ENCODE measurements at regions of chr2 and their contacts with region 1.

Region 1: GRCh38 chr2:43312755-43313641 is 86.6 kb upstream of the ZFP36L2 start:
- DNase-seq: peak; percentile 79
- ATAC-seq: peak; percentile 91
- H3K4me3 ChIP-seq: no peak overlapping the region
- H3K27ac ChIP-seq: peak overlapping the region; percentile 38
- H3K4me1 ChIP-seq: peaks cover 37% of the 10 kb centered on the region
- H3K27me3 ChIP-seq: no peaks in the 10 kb centered on the region
- CTCF ChIP-seq: no peak

Region 2: GRCh38 chr2:43288417-43289305 is 24.3 kb before region 1 on chr2:
- CTCF ChIA-PET with region 1: no interaction called
- POLR2A ChIA-PET with region 1: no interaction called
- intact Hi-C with region 1: no loop called
- DNase-seq: no peak
- ATAC-seq: no peak
- H3K4me3 ChIP-seq: no peak overlapping the region
- H3K27ac ChIP-seq: no peak overlapping the region
- H3K4me1 ChIP-seq: peaks cover 7% of the 10 kb centered on the region
- H3K27me3 ChIP-seq: no peaks in the 10 kb centered on the region
- CTCF ChIP-seq: no peak

Region 3: DNA sequence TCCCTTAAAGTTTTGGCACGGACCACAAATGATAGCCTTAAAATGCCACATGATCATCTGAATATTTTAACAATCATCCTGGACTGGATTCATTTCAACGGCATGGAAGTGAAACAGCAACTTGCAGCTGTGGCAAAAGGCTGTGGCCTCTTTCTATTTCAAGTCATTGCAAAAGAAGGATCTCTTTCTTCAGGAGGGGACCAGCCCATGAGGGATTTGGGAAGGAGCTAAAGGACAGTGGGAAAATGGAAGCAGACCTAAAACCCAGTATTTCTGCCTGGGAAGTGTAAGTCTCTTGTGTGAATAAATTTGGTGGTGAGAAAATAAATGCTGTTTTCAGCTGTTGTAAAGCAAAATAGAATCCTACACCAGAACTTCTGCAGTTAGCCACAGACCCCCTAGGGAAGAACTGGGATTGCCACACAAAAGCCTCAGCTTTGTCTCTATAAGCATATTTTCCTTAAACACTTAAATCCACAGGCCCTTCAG is 20.7 kb after region 1 on chr2:
- CTCF ChIA-PET with region 1: no interaction called
- POLR2A ChIA-PET with region 1: no interaction called
- intact Hi-C with region 1: no loop called
- DNase-seq: no peak
- ATAC-seq: no peak
- H3K4me3 ChIP-seq: no peak overlapping the region
- H3K27ac ChIP-seq: no peak overlapping the region
- H3K4me1 ChIP-seq: no peaks in the 10 kb centered on the region
- H3K27me3 ChIP-seq: no peaks in the 10 kb centered on the region
- CTCF ChIP-seq: no peak

Region 4: DNA sequence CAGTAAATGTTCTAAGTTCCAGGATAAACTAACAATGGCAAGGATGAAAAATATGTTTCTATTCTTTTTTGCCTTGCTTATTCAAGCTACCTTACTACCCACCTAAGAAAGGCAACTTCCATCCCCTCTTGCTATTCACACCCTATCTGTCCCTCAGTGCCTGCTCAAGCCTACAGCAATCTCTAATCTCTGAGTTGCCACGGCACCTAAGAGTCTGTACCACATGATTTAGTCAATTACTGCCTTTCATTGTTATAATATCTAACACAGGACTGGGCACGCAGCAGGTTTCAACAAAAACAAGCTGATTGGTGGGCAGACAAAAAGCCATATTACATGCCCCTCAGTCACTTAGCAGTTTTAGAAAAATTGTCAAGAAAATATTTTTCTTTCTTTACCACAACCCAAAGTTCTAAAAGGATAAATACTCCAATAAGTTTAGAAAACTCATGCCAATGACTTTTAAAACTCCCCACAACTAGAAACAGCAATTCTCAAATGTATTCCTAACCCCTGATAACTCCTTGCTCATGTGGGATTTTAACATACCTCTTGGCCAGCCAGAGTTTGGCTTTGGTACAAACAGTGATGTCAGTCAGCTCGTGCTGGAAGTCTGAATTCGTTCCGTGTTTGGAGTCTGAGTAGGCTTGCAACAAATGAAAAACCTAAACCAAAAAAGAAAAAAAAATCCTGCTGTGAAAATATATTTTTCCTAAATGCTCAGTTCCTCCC is 30.7 kb after region 1 on chr2:
- CTCF ChIA-PET with region 1: no interaction called
- POLR2A ChIA-PET with region 1: no interaction called
- intact Hi-C with region 1: loop called (anchors 2 kb)
- DNase-seq: no peak
- ATAC-seq: no peak
- H3K4me3 ChIP-seq: no peak overlapping the region
- H3K27ac ChIP-seq: no peak overlapping the region
- H3K4me1 ChIP-seq: peaks cover 23% of the 10 kb centered on the region
- H3K27me3 ChIP-seq: no peaks in the 10 kb centered on the region
- CTCF ChIP-seq: no peak

Region 5: GRCh38 chr2:43461453-43462073 is 148.6 kb after region 1 on chr2:
- CTCF ChIA-PET with region 1: no interaction called
- POLR2A ChIA-PET with region 1: no interaction called
- intact Hi-C with region 1: no loop called
- DNase-seq: peak; percentile 37
- ATAC-seq: peak; percentile 10; the same call in 1 of the 2 replicates
- H3K4me3 ChIP-seq: no peak overlapping the region
- H3K27ac ChIP-seq: no peak overlapping the region
- H3K4me1 ChIP-seq: peaks cover 61% of the 10 kb centered on the region
- H3K27me3 ChIP-seq: no peaks in the 10 kb centered on the region
- CTCF ChIP-seq: no peak

Region 6: GRCh38 chr2:43605079-43605655 is 292.2 kb after region 1 on chr2:
- CTCF ChIA-PET with region 1: no interaction called
- POLR2A ChIA-PET with region 1: interaction called, 16 read pairs
- intact Hi-C with region 1: no loop called
- DNase-seq: peak; percentile 75
- ATAC-seq: peak; percentile 92
- H3K4me3 ChIP-seq: no peak overlapping the region
- H3K27ac ChIP-seq: no peak overlapping the region
- H3K4me1 ChIP-seq: no peaks in the 10 kb centered on the region
- H3K27me3 ChIP-seq: no peaks in the 10 kb centered on the region
- CTCF ChIP-seq: peak; percentile 76

Region 7: GRCh38 chr2:43676322-43677050 is 363.5 kb after region 1 on chr2 and contains the start of gene C1GALT1C1L:
- CTCF ChIA-PET with region 1: no interaction called
- POLR2A ChIA-PET with region 1: interaction called, 18 read pairs
- intact Hi-C with region 1: no loop called
- DNase-seq: no peak
- ATAC-seq: no peak
- H3K4me3 ChIP-seq: no peak within 1 kb of the TSS
- H3K27ac ChIP-seq: no peak within 1 kb of the TSS
- H3K4me1 ChIP-seq: no peaks in the 10 kb centered on the region
- H3K27me3 ChIP-seq: no peaks in the 10 kb centered on the region
- CTCF ChIP-seq: no peak
- total RNA-seq, gene C1GALT1C1L: not detected in 2 replicates